H1 (cell line): ENCODE measurements at regions of chr1 and their contacts with region 1.

Region 1: GRCh38 chr1:237851210-237851845 is 39.4 kb downstream of the ZP4 start:
- DNase-seq: peak; percentile 41 to 82
- H3K4me3 ChIP-seq: no peak overlapping the region
- H3K27ac ChIP-seq: no peak overlapping the region
- H3K4me1 ChIP-seq: peaks cover 0 to 3% (median 0%) of the 10 kb centered on the region in 4 experiments; a peak in 2 of 7 replicates
- H3K27me3 ChIP-seq: no peaks in the 10 kb centered on the region
- CTCF ChIP-seq: peak; percentile 66 to 87 (median 76)
- EP300 ChIP-seq: no peak
- POLR2A ChIP-seq: no peak
- RAD21 ChIP-seq: peak; percentile 88 to 90

Region 2: GRCh38 chr1:237794071-237794470 is 57.3 kb before region 1 on chr1:
- CTCF ChIA-PET with region 1: no interaction called
- POLR2A ChIA-PET with region 1: no interaction called
- DNase-seq: no peak
- H3K4me3 ChIP-seq: no peak overlapping the region
- H3K27ac ChIP-seq: no peak overlapping the region
- H3K4me1 ChIP-seq: no peaks in the 10 kb centered on the region
- H3K27me3 ChIP-seq: no peaks in the 10 kb centered on the region
- CTCF ChIP-seq: no peak
- EP300 ChIP-seq: no peak
- POLR2A ChIP-seq: no peak
- RAD21 ChIP-seq: no peak

Region 3: GRCh38 chr1:237811633-237812032 is 39.7 kb before region 1 on chr1:
- CTCF ChIA-PET with region 1: interaction called, 10 read pairs
- POLR2A ChIA-PET with region 1: no interaction called
- DNase-seq: no peak
- H3K4me3 ChIP-seq: no peak overlapping the region
- H3K27ac ChIP-seq: no peak overlapping the region
- H3K4me1 ChIP-seq: no peaks in the 10 kb centered on the region; a peak in 1 of 7 replicates
- H3K27me3 ChIP-seq: no peaks in the 10 kb centered on the region
- CTCF ChIP-seq: no peak
- EP300 ChIP-seq: no peak
- POLR2A ChIP-seq: no peak
- RAD21 ChIP-seq: no peak

Region 4: GRCh38 chr1:237834461-237834860 is 16.9 kb before region 1 on chr1:
- CTCF ChIA-PET with region 1: interaction called, 42 read pairs
- POLR2A ChIA-PET with region 1: no interaction called
- DNase-seq: no peak
- H3K4me3 ChIP-seq: no peak overlapping the region
- H3K27ac ChIP-seq: no peak overlapping the region
- H3K4me1 ChIP-seq: peaks cover 0 to 13% (median 3%) of the 10 kb centered on the region in 4 experiments; a peak in 4 of 7 replicates
- H3K27me3 ChIP-seq: no peaks in the 10 kb centered on the region
- CTCF ChIP-seq: no peak
- EP300 ChIP-seq: no peak
- POLR2A ChIP-seq: no peak
- RAD21 ChIP-seq: no peak